ENCODE measurements at regions of chr7 and their contacts with region 1.

Region 1: GRCh38 chr7:106865130-106866041 is at the start of gene PIK3CG:
- DNase-seq: peak in 1 of 2 donors; percentile 78
- ATAC-seq: peak; percentile 85 to 94 (median 94)
- H3K4me3 ChIP-seq: peak within 1 kb of the TSS; percentile 89
- H3K4me3 Mint-ChIP-seq: peak within 1 kb of the TSS; percentile 94
- H3K27ac ChIP-seq: peak within 1 kb of the TSS; percentile 93
- H3K27ac Mint-ChIP-seq: peak within 1 kb of the TSS; percentile 92 to 97
- H3K4me1 ChIP-seq: peaks cover 43% of the 10 kb centered on the region
- H3K4me1 Mint-ChIP-seq: peaks cover 88 to 91% of the 10 kb centered on the region in 2 donors
- H3K27me3 ChIP-seq: no peaks in the 10 kb centered on the region
- H3K27me3 Mint-ChIP-seq: no peaks in the 10 kb centered on the region
- CTCF ChIP-seq: no peak
- total RNA-seq, gene PIK3CG: 64.9 to 83.3 (median 78.2) TPM

Region 2: GRCh38 chr7:106421181-106421762 is 444.1 kb before region 1 on chr7:
- intact Hi-C with region 1: no loop called
- DNase-seq: no peak
- ATAC-seq: no peak
- H3K4me3 ChIP-seq: no peak overlapping the region
- H3K4me3 Mint-ChIP-seq: no peak overlapping the region
- H3K27ac ChIP-seq: no peak overlapping the region
- H3K27ac Mint-ChIP-seq: no peak overlapping the region
- H3K4me1 ChIP-seq: peaks cover 9% of the 10 kb centered on the region
- H3K4me1 Mint-ChIP-seq: no peaks in the 10 kb centered on the region
- H3K27me3 ChIP-seq: no peaks in the 10 kb centered on the region
- H3K27me3 Mint-ChIP-seq: peaks cover 9 to 14% of the 10 kb centered on the region in 2 donors
- CTCF ChIP-seq: no peak

Region 3: GRCh38 chr7:106793015-106793975 is 72.1 kb before region 1 on chr7:
- intact Hi-C with region 1: loop called (anchors 2 kb)
- DNase-seq: peak in 1 of 2 donors; percentile 82
- ATAC-seq: peak; percentile 57 to 73 (median 69)
- H3K4me3 ChIP-seq: no peak overlapping the region
- H3K4me3 Mint-ChIP-seq: no peak overlapping the region
- H3K27ac ChIP-seq: no peak overlapping the region
- H3K27ac Mint-ChIP-seq: no peak overlapping the region
- H3K4me1 ChIP-seq: no peaks in the 10 kb centered on the region
- H3K4me1 Mint-ChIP-seq: no peaks in the 10 kb centered on the region
- H3K27me3 ChIP-seq: no peaks in the 10 kb centered on the region
- H3K27me3 Mint-ChIP-seq: peaks cover 0 to 8% of the 10 kb centered on the region in 2 donors
- CTCF ChIP-seq: peak; percentile 85